CD8-positive, alpha-beta T cell (primary cell): ENCODE measurements at regions of chr22 and their contacts with region 1.

Region 1: GRCh38 chr22:39532215-39533071 is at the start of gene RPS19BP1:
- DNase-seq: peak; percentile 98 to 100 (median 99)
- ATAC-seq: peak; percentile 84
- H3K4me3 ChIP-seq: peak within 1 kb of the TSS; percentile 83 to 99
- H3K4me3 Mint-ChIP-seq: peak within 1 kb of the TSS; percentile 97
- H3K27ac ChIP-seq: peak within 1 kb of the TSS; percentile 78 to 97
- H3K27ac Mint-ChIP-seq: peak within 1 kb of the TSS; percentile 95
- H3K4me1 ChIP-seq: peaks cover 55% of the 10 kb centered on the region
- H3K4me1 Mint-ChIP-seq: peaks cover 56% of the 10 kb centered on the region
- H3K27me3 ChIP-seq: no peaks in the 10 kb centered on the region
- H3K27me3 Mint-ChIP-seq: no peaks in the 10 kb centered on the region
- CTCF ChIP-seq: no peak
- total RNA-seq, gene RPS19BP1: 69.0 to 70.5 TPM

Region 2: GRCh38 chr22:39152511-39153219 is 379.8 kb before region 1 on chr22 and contains the start of gene CBX7:
- CTCF ChIA-PET with region 1: interaction called, 3 read pairs
- POLR2A ChIA-PET with region 1: no interaction called
- intact Hi-C with region 1: loop called in 1 of 2 experiments (anchors 5 kb)
- DNase-seq: peak; percentile 84 to 99 (median 92)
- ATAC-seq: peak; percentile 82
- H3K4me3 ChIP-seq: peak within 1 kb of the TSS; percentile 83 to 89
- H3K4me3 Mint-ChIP-seq: peak within 1 kb of the TSS; percentile 92
- H3K27ac ChIP-seq: peak within 1 kb of the TSS; percentile 86 to 87
- H3K27ac Mint-ChIP-seq: peak within 1 kb of the TSS; percentile 91
- H3K4me1 ChIP-seq: peaks cover 51% of the 10 kb centered on the region
- H3K4me1 Mint-ChIP-seq: peaks cover 42% of the 10 kb centered on the region
- H3K27me3 ChIP-seq: no peaks in the 10 kb centered on the region
- H3K27me3 Mint-ChIP-seq: no peaks in the 10 kb centered on the region
- CTCF ChIP-seq: no peak
- total RNA-seq, gene CBX7: 34.2 to 37.2 TPM

Region 3: GRCh38 chr22:39439170-39439569 is 93.3 kb before region 1 on chr22:
- CTCF ChIA-PET with region 1: interaction called, 5 read pairs
- POLR2A ChIA-PET with region 1: no interaction called
- intact Hi-C with region 1: loop called in 1 of 2 experiments (anchors 5 kb)
- DNase-seq: no peak
- ATAC-seq: no peak
- H3K4me3 ChIP-seq: no peak overlapping the region
- H3K4me3 Mint-ChIP-seq: no peak overlapping the region
- H3K27ac ChIP-seq: no peak overlapping the region
- H3K27ac Mint-ChIP-seq: no peak overlapping the region
- H3K4me1 ChIP-seq: peaks cover 17% of the 10 kb centered on the region
- H3K4me1 Mint-ChIP-seq: peaks cover 16% of the 10 kb centered on the region
- H3K27me3 ChIP-seq: peaks cover 0 to 3% of the 10 kb centered on the region in 2 experiments
- H3K27me3 Mint-ChIP-seq: peaks cover 15% of the 10 kb centered on the region
- CTCF ChIP-seq: no peak

Region 4: GRCh38 chr22:39520054-39520891 is 12.2 kb before region 1 on chr22 and contains the start of gene ATF4:
- CTCF ChIA-PET with region 1: interaction called, 65 read pairs
- POLR2A ChIA-PET with region 1: interaction called, 45 read pairs
- intact Hi-C with region 1: loop called (anchors 1 kb)
- DNase-seq: peak; percentile 93 to 99 (median 95)
- ATAC-seq: peak; percentile 89
- H3K4me3 ChIP-seq: peak within 1 kb of the TSS; percentile 98 to 99
- H3K4me3 Mint-ChIP-seq: peak within 1 kb of the TSS; percentile 98
- H3K27ac ChIP-seq: peak within 1 kb of the TSS; percentile 87 to 88
- H3K27ac Mint-ChIP-seq: peak within 1 kb of the TSS; percentile 99
- H3K4me1 ChIP-seq: peaks cover 48% of the 10 kb centered on the region
- H3K4me1 Mint-ChIP-seq: peaks cover 44% of the 10 kb centered on the region
- H3K27me3 ChIP-seq: no peaks in the 10 kb centered on the region
- H3K27me3 Mint-ChIP-seq: no peaks in the 10 kb centered on the region
- CTCF ChIP-seq: no peak
- total RNA-seq, gene ATF4: 327 to 329 TPM

Region 5: GRCh38 chr22:39932918-39933649 is 400.6 kb after region 1 on chr22:
- CTCF ChIA-PET with region 1: interaction called, 10 read pairs
- POLR2A ChIA-PET with region 1: no interaction called
- intact Hi-C with region 1: no loop called
- DNase-seq: peak in 7 of 9 experiments; percentile 27 to 85 (median 72)
- ATAC-seq: peak; percentile 66
- H3K4me3 ChIP-seq: peak overlapping the region in 1 of 2 experiments; percentile 35
- H3K4me3 Mint-ChIP-seq: peak overlapping the region; percentile 77
- H3K27ac ChIP-seq: peak overlapping the region; percentile 72
- H3K27ac Mint-ChIP-seq: no peak overlapping the region
- H3K4me1 ChIP-seq: peaks cover 98% of the 10 kb centered on the region
- H3K4me1 Mint-ChIP-seq: peaks cover 54% of the 10 kb centered on the region
- H3K27me3 ChIP-seq: no peaks in the 10 kb centered on the region
- H3K27me3 Mint-ChIP-seq: no peaks in the 10 kb centered on the region
- CTCF ChIP-seq: peak; percentile 62

Region 6: DNA sequence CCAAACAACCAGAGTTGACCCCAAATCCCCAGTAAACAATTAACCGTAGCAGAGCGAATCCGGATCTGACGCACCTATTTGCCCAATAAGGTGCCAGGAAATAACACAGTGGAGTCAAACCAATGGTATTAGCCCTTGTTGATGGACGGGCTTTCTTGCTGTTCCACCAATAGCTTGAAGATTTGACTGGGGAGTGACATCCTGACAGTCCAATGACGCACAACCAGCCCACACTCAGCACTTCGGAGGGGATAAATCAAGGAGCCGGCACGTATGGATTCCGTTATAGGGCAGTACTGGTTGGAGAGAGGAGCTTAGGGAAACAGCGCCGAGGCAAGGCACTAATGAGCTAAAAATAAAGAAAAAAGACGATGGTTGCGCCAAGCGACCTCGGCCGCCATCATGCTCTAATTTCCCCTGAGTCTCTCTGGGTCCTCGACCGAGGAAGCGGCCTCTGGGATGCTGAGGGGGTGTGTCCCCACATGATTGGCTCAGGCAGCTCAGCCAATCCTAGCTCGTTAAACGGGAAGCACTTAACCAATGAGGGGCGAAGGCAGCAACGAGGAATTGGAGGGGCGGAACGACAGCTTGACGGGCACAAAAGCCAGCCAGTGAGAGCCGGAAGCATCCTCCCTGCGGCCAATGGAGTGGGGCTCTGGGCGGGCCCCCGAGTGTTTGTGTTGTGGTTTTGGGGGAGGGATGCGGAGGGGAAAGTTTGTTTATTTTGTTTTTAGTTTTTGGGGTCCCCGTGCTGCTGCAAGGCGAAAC is 511.8 kb after region 1 on chr22:
- CTCF ChIA-PET with region 1: interaction called, 12 read pairs
- POLR2A ChIA-PET with region 1: interaction called, 6 read pairs
- intact Hi-C with region 1: loop called (anchors 1 kb)
- DNase-seq: peak; percentile 95 to 100 (median 99)
- ATAC-seq: peak; percentile 86
- H3K4me3 ChIP-seq: peak overlapping the region; percentile 80 to 84
- H3K4me3 Mint-ChIP-seq: peak overlapping the region; percentile 94
- H3K27ac ChIP-seq: peak overlapping the region; percentile 97 to 98
- H3K27ac Mint-ChIP-seq: peak overlapping the region; percentile 100
- H3K4me1 ChIP-seq: peaks cover 28% of the 10 kb centered on the region
- H3K4me1 Mint-ChIP-seq: peaks cover 39% of the 10 kb centered on the region
- H3K27me3 ChIP-seq: no peaks in the 10 kb centered on the region
- H3K27me3 Mint-ChIP-seq: peaks cover 8% of the 10 kb centered on the region
- CTCF ChIP-seq: no peak

Region 7: GRCh38 chr22:40856513-40857308 is 1324.3 kb after region 1 on chr22 and contains the starts of genes ST13 and XPNPEP3:
- CTCF ChIA-PET with region 1: no interaction called
- POLR2A ChIA-PET with region 1: no interaction called
- intact Hi-C with region 1: loop called in 1 of 2 experiments (anchors 5 kb)
- DNase-seq: peak; percentile 92 to 98 (median 97)
- ATAC-seq: peak; percentile 88
- H3K4me3 ChIP-seq: peak within 1 kb of the TSS; percentile 85 to 97
- H3K4me3 Mint-ChIP-seq: peak within 1 kb of the TSS; percentile 98
- H3K27ac ChIP-seq: peak within 1 kb of the TSS; percentile 97 to 99
- H3K27ac Mint-ChIP-seq: peak within 1 kb of the TSS; percentile 100
- H3K4me1 ChIP-seq: peaks cover 40% of the 10 kb centered on the region
- H3K4me1 Mint-ChIP-seq: peaks cover 65% of the 10 kb centered on the region
- H3K27me3 ChIP-seq: no peaks in the 10 kb centered on the region
- H3K27me3 Mint-ChIP-seq: no peaks in the 10 kb centered on the region
- CTCF ChIP-seq: peak; percentile 42
- total RNA-seq, gene ST13: 143 to 160 TPM
- total RNA-seq, gene XPNPEP3: 13.9 to 15.2 TPM